ENCODE measurements at regions of chr22 and their contacts with region 1.

Region 1: DNA sequence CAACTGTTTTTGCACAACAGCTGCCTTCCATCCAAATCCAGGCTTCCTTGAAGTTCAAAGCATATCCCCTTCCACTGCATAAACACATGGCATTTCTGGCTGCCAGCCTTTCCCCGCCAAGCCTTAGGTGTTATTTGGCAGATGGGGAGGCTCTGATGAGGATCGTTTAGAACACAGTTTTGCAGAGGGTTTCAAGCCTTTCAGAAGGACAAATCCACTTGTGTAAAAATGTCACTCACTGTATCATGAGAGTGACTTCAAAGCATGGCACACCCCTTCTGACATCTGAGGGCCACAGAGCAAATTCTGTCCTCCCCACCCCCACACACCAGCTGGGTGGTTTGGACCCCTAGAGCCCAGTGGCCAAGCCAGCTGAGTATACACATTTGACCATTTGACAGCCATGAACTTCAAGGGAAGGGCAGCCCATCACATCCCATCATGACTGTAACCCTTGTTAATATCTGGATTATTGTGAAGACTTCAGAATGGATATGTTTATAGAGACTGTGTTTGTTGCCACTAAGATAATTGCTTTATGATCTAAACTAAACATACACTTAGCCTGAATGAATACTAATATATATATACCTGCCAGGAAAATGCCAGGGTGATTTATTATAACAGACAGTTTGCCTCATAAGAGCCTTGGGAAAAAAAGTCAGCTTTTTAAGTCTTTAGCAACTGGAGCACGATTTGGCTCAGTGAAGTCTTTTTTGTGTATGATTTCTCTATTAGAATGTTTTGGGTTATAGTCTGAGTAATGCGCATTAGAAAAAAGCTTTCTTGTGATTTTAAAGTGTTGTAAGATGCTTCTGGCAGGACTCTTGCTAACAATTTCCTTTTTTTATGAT is 31.9 kb downstream of the FBLN1 start:
- DNase-seq: no peak
- H3K4me3 ChIP-seq: no peak overlapping the region
- H3K27me3 ChIP-seq: no peaks in the 10 kb centered on the region
- CTCF ChIP-seq: no peak

Region 2: DNA sequence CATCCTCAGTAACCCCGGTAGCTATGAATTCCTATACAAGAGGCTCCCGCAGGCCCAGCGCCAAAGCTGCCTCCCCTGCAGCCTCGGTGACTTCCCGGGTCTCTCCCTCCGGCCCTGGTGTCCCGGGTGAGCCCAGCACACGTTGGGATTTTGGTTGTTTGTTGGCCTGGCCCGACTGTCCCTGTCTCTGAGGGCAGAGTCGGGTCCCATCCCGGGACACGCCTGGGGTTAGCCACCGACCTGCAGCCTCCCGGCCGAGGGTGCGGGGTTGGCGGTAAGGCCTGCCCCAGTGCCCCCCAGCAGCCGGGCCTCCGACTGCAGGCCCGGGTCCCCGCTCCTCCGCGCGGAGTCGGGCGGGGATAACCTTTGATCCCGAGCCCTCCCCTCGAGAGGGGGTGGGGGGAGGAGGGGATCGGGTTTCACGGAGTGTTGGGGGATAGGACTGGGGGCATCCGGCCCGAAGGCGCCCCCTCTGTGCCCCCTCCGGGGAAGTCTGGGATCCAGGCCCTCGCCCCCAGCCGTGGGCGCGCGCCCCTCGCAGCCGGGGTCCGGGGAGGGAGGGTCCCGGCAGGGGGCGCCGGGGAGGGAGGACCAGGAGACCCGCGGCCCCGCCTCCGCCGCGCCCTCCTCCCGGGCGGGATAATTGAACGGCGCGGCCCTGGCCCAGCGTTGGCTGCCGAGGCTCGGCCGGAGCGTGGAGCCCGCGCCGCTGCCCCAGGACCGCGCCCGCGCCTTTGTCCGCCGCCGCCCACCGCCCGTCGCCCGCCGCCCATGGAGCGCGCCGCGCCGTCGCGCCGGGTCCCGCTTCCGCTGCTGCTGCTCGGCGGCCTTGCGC is 32.1 kb before region 1 on chr22 and contains the start of gene FBLN1:
- CTCF ChIA-PET with region 1: no interaction called
- POLR2A ChIA-PET with region 1: interaction called, 15 read pairs
- DNase-seq: no peak
- H3K4me3 ChIP-seq: peak within 1 kb of the TSS; percentile 99
- H3K27me3 ChIP-seq: no peaks in the 10 kb centered on the region
- CTCF ChIP-seq: peak; percentile 22; the same call in 1 of the 2 replicates
- polyA plus RNA-seq, gene FBLN1: 681 and 1,033 TPM in 2 replicates